Heart left ventricle (tissue), 16 donors: ENCODE measurements at regions of chr6 and their contacts with region 1.

Region 1: DNA sequence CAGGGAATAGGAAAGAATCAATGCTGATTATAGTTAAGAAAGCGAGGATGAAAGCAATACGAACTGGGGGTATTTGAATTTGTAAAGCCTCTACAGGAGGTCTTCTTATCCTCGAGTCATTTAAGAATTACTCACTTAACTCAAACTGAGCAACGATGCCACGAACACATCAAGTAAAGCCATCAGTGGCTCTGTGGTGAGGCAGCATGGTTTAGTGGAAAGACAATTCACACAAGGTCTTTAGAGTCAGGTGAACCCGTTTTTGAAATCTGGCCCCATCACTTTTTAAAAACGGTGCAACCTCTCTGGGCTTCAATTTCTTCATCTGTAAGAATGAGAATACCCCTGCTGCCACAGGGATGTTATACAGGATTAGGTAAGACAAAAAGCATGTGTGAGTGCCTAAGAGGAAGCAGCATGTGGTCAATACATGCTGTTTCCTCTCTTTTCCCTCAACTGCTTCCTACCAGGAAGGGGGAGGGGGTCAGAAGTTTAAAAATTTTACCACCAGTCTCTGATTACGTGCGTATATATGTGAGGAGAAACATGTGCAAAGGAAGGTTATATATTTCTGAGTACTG is 162.0 kb downstream of the BTBD9 start:
- DNase-seq: no peak
- ATAC-seq: no peak
- H3K4me3 ChIP-seq: no peak overlapping the region
- H3K27ac ChIP-seq: no peak overlapping the region
- H3K4me1 ChIP-seq: peaks cover 0 to 25% (median 0%) of the 10 kb centered on the region in 12 donors
- H3K27me3 ChIP-seq: no peaks in the 10 kb centered on the region
- CTCF ChIP-seq: no peak
- POLR2A ChIP-seq: no peak

Region 2: DNA sequence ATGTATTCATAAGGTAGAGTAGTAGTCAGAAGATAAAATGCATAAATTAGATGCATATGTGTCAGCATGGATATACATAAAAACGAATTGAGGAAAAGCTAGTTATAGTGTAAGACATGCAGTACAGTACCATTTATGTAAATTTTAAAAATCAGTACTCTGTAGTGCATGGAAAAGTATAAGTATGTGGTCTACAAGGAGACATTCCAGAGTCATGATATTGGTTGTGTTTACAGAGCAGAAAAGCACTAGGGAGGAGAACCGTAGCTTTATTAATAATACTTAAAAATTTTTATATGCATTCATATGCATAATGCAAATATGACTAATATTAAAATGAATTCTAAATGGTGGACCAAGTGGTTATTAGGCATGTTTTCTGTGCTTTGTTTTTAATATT is 438.3 kb before region 1 on chr6:
- intact Hi-C with region 1: loop called in 1 of 10 experiments (anchors 5 kb)
- DNase-seq: no peak
- ATAC-seq: no peak
- H3K4me3 ChIP-seq: no peak overlapping the region
- H3K27ac ChIP-seq: no peak overlapping the region
- H3K4me1 ChIP-seq: peaks cover 0 to 21% (median 5%) of the 10 kb centered on the region in 12 donors
- H3K27me3 ChIP-seq: no peaks in the 10 kb centered on the region
- CTCF ChIP-seq: no peak
- POLR2A ChIP-seq: no peak

Region 3: DNA sequence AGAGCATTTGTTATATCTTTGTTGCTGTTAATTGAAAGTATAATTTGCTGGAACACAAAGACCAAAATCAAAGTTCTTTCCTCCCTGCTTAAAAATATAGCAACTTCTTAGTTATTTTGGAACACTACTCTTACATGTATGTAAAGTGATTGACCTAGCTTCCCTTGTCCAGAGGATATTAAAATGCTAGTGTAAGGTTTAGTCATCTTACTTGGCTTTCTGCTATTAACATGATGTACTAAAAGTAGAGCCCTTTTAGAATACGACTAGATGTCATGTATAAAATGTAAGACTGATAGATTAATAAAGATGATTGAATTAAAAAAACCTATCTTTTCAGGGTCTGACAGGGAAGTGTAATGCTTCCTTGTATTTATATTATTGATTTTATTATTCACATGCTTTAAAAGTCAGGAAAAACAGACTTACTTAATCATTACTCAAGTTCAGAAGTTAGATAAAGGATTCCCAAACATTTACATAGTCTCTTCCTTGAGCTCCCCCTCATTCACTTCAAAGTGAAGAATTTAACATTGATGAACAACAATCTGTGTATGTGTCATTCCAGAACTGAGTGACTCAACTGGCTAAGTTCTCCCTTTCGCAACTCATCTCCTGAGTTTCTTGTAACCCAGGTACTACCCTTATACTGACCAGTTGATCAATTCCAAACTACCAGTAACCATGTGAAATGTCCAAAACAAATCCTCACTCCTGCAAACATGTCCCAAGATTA is 111.0 kb after region 1 on chr6:
- intact Hi-C with region 1: no loop called
- DNase-seq: no peak
- ATAC-seq: no peak
- H3K4me3 ChIP-seq: no peak overlapping the region
- H3K27ac ChIP-seq: no peak overlapping the region
- H3K4me1 ChIP-seq: no peaks in the 10 kb centered on the region
- H3K27me3 ChIP-seq: no peaks in the 10 kb centered on the region
- CTCF ChIP-seq: no peak
- POLR2A ChIP-seq: no peak

Region 4: GRCh38 chr6:38639498-38640215 is 161.9 kb after region 1 on chr6 and contains the start of gene BTBD9:
- intact Hi-C with region 1: no loop called
- DNase-seq: peak; percentile 85 to 91 (median 87)
- ATAC-seq: peak; percentile 83 to 94 (median 92)
- H3K4me3 ChIP-seq: peak within 1 kb of the TSS; percentile 68 to 96 (median 84)
- H3K27ac ChIP-seq: peak within 1 kb of the TSS; percentile 91 to 98 (median 96)
- H3K4me1 ChIP-seq: peaks cover 0 to 39% (median 20%) of the 10 kb centered on the region in 12 donors
- H3K27me3 ChIP-seq: no peaks in the 10 kb centered on the region
- CTCF ChIP-seq: no peak
- POLR2A ChIP-seq: peak in 1 of 2 donors; percentile 65
- total RNA-seq, gene BTBD9: 13.4 to 23.3 (median 20.0) TPM

Region 5: DNA sequence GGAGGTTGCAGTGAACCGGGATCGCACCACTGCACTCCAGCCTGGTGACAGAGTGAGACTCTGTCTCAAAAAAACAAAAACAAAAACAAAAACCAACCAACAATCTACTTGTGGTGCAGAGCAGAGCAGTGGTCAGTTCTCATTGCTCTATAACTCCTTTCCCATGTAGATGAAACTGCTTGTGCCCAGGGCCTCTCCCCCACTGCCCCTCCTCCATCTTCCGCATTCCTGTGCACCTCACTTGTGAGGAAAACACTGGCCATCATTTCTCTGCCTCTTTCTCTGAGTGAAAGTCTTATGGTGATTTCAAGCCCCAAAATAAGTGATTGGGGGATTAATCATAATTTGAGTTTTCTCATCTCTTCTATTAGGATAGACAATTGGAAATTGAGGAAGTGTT is 507.0 kb after region 1 on chr6:
- intact Hi-C with region 1: no loop called
- DNase-seq: no peak
- ATAC-seq: no peak
- H3K4me3 ChIP-seq: no peak overlapping the region
- H3K27ac ChIP-seq: no peak overlapping the region
- H3K4me1 ChIP-seq: no peaks in the 10 kb centered on the region
- H3K27me3 ChIP-seq: peaks cover 0 to 50% (median 5%) of the 10 kb centered on the region in 9 donors
- CTCF ChIP-seq: no peak
- POLR2A ChIP-seq: no peak